Activated CD8-positive, alpha-beta memory T cell treated with anti-CD3 and anti-CD28 coated beads, Interleukin-2, amount 10 ng/mL, durations not matched to agents 7 days and 5 days (primary cell): ENCODE measurements at regions of chr17 and their contacts with region 1.

Region 1: DNA sequence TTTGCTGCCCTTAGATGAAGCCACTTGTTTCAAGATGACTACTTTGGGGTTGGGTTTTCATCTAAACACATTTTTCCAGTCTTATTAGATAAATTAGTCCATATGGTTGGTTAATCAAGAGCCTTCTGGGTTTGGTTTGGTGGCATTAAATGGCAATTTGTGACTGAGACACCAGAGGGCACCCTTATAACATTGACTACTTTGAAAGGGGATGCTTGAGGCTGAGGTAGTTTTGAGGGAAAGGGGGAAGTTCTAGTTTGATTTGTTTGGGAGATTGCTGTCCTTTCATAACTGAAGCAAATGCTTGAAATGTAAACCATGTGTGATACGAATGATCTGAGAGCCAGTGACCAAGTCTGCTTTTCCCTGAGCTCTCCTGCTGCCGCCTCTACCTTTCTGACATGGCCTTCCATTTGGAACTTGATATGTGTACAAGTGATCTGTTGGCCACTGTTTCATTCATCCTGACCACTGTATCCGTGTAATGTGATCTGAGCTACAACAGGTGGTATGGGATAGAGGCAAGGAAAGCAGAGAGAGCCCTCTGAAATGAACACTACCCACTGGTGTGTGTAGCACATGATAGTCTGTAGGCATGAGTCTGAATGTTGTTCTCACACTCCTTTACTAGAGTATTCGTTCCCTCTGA is 5.8 kb upstream of the RARA start:
- DNase-seq: no peak
- ATAC-seq: peak; percentile 56
- H3K4me3 Mint-ChIP-seq: no peak overlapping the region
- H3K27ac Mint-ChIP-seq: no peak overlapping the region
- H3K4me1 Mint-ChIP-seq: peaks cover 14% of the 10 kb centered on the region
- H3K27me3 Mint-ChIP-seq: no peaks in the 10 kb centered on the region

Region 2: GRCh38 chr17:40242774-40243173 is 60.4 kb before region 1 on chr17:
- CTCF ChIA-PET with region 1: no interaction called
- DNase-seq: no peak
- ATAC-seq: no peak
- H3K4me3 Mint-ChIP-seq: no peak overlapping the region
- H3K27ac Mint-ChIP-seq: no peak overlapping the region
- H3K4me1 Mint-ChIP-seq: peaks cover 12% of the 10 kb centered on the region
- H3K27me3 Mint-ChIP-seq: no peaks in the 10 kb centered on the region

Region 3: GRCh38 chr17:40287494-40288369 is 15.4 kb before region 1 on chr17 and contains the start of gene CDC6:
- CTCF ChIA-PET with region 1: interaction called, 23 read pairs
- DNase-seq: peak; percentile 100
- ATAC-seq: peak; percentile 94
- H3K4me3 Mint-ChIP-seq: peak within 1 kb of the TSS; percentile 99
- H3K27ac Mint-ChIP-seq: peak within 1 kb of the TSS; percentile 98
- H3K4me1 Mint-ChIP-seq: peaks cover 56% of the 10 kb centered on the region
- H3K27me3 Mint-ChIP-seq: no peaks in the 10 kb centered on the region
- total RNA-seq, gene CDC6: 109 to 111 TPM

Region 4: DNA sequence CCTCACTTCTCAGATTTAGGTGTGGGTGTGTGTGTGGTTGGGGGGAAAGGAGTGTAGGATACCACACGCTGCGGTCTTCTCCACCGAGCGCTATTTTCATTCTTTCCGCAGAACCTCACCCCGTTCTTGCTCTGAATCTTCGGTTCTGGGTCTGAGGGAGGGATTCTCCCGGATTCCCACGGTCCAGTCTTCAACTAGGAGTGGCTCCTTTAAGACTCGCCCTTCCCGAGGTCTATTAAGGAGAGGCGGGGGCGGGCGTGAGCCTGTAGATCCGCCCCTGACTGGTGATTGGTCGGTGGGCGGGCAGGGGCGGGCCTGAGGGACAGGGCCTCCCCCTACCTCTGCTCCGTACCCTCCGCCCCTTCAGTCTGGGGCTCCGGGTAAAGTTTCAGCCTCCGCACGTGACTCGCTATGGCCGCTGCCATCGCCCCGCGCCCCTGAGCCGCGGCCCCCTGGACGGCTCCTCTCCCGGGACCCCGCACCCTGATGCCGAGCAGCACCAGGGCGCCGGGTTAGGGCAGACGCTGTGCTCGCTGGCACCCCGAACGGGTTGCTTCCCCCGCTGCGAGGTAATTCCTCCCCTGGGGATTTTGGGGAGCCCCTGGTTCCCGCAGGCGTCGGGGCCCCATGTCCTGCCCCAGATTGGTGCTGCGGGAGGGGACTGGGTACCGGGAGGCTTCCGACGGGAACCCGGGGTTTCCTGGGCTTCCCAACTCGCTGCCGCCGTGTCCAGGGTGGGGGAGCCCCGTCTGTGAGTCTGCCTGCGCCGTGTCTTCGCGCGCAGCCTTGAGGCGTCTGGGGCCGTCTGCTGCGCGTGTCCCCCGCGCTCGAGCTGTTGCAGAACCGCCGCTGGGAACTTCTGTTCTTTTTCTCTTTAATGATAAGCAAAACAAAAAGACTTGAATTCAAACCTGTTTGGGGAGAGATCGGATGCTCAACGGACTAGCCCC is 15.0 kb after region 1 on chr17:
- CTCF ChIA-PET with region 1: interaction called, 53 read pairs
- DNase-seq: peak; percentile 95
- ATAC-seq: peak; percentile 77
- H3K4me3 Mint-ChIP-seq: peak overlapping the region; percentile 94
- H3K27ac Mint-ChIP-seq: peak overlapping the region; percentile 88
- H3K4me1 Mint-ChIP-seq: peaks cover 82% of the 10 kb centered on the region
- H3K27me3 Mint-ChIP-seq: no peaks in the 10 kb centered on the region

Region 5: GRCh38 chr17:40326014-40326831 is 23.1 kb after region 1 on chr17:
- CTCF ChIA-PET with region 1: interaction called, 12 read pairs
- DNase-seq: peak; percentile 80
- ATAC-seq: no peak
- H3K4me3 Mint-ChIP-seq: peak overlapping the region; percentile 68
- H3K27ac Mint-ChIP-seq: peak overlapping the region; percentile 97
- H3K4me1 Mint-ChIP-seq: peaks cover 91% of the 10 kb centered on the region
- H3K27me3 Mint-ChIP-seq: no peaks in the 10 kb centered on the region

Region 6: DNA sequence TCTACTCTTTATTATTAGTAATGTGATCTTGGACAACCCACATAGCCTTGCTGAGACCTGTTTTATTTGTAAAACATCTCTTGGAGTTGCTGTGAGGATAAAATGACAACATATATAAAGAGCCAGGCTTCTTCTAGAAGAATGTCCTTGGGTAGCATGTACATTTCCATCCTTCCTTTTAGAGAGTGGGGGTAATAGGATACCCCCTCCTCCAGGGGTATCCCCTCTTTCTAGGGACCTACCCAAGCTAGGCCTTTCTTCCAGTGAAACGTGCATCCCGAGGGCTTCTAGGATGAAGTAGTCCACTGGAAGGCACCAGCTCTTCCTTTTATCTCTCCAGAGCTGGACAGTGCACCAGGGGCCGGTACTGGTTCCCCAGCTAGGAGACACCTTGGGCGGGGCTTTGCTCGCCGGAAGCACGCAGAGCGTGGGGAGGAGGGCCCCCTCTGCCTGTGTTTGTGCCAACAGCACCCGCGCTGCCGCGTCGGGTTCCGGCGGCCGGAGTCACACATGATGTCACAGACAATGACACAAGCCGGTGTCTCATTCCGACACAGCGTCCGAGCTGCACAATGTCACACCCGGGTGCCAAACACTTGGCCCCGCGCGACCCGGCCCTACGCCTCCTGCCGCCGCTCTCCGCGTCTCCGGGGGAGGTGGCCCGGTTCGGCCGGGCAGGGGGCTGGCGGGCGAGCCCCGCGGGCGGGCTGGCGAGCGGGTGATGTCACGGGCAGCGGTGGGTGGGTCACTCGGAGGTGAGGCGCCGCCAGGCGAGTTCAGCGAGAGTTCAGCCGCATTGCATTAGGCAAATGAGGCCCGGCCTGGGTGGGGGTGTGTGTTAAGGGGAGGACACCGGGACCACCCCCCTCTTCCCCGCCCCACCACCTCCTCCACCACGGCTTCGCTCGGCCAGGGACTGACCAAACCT is 38.0 kb after region 1 on chr17:
- CTCF ChIA-PET with region 1: interaction called, 20 read pairs
- DNase-seq: peak; percentile 95
- ATAC-seq: peak; percentile 91
- H3K4me3 Mint-ChIP-seq: peak overlapping the region; percentile 68
- H3K27ac Mint-ChIP-seq: peak overlapping the region; percentile 87
- H3K4me1 Mint-ChIP-seq: peaks cover 75% of the 10 kb centered on the region
- H3K27me3 Mint-ChIP-seq: no peaks in the 10 kb centered on the region